Activated naive CD4-positive, alpha-beta T cell treated with anti-CD3 and anti-CD28 coated beads for 36 hours (primary cell): ENCODE measurements at regions of chr2 and their contacts with region 1.

Region 1: GRCh38 chr2:127526149-127527000 is at the start of gene IWS1:
- DNase-seq: peak; percentile 96
- H3K4me3 Mint-ChIP-seq: peak within 1 kb of the TSS; percentile 86
- H3K27ac Mint-ChIP-seq: peak within 1 kb of the TSS; percentile 90
- H3K4me1 Mint-ChIP-seq: peaks cover 27% of the 10 kb centered on the region
- H3K27me3 Mint-ChIP-seq: no peaks in the 10 kb centered on the region
- total RNA-seq, gene IWS1: 52.1 to 52.5 TPM

Region 2: GRCh38 chr2:126657636-126658318 is 868.6 kb before region 1 on chr2:
- CTCF ChIA-PET with region 1: no interaction called
- intact Hi-C with region 1: loop called (anchors 2 kb)
- DNase-seq: peak; percentile 87
- H3K4me3 Mint-ChIP-seq: peak overlapping the region; percentile 100
- H3K27ac Mint-ChIP-seq: peak overlapping the region; percentile 100
- H3K4me1 Mint-ChIP-seq: peaks cover 61% of the 10 kb centered on the region
- H3K27me3 Mint-ChIP-seq: no peaks in the 10 kb centered on the region

Region 3: GRCh38 chr2:127197475-127198385 is 328.6 kb before region 1 on chr2:
- CTCF ChIA-PET with region 1: interaction called, 3 read pairs
- intact Hi-C with region 1: loop called (anchors 5 kb)
- DNase-seq: peak; percentile 80
- H3K4me3 Mint-ChIP-seq: peak overlapping the region; percentile 69
- H3K27ac Mint-ChIP-seq: no peak overlapping the region
- H3K4me1 Mint-ChIP-seq: peaks cover 5% of the 10 kb centered on the region
- H3K27me3 Mint-ChIP-seq: no peaks in the 10 kb centered on the region

Region 4: GRCh38 chr2:127415593-127416505 is 110.5 kb before region 1 on chr2:
- CTCF ChIA-PET with region 1: no interaction called
- intact Hi-C with region 1: loop called (anchors 1 kb)
- DNase-seq: peak; percentile 91
- H3K4me3 Mint-ChIP-seq: peak overlapping the region; percentile 63
- H3K27ac Mint-ChIP-seq: peak overlapping the region; percentile 61
- H3K4me1 Mint-ChIP-seq: peaks cover 34% of the 10 kb centered on the region
- H3K27me3 Mint-ChIP-seq: peaks cover 21% of the 10 kb centered on the region

Region 5: DNA sequence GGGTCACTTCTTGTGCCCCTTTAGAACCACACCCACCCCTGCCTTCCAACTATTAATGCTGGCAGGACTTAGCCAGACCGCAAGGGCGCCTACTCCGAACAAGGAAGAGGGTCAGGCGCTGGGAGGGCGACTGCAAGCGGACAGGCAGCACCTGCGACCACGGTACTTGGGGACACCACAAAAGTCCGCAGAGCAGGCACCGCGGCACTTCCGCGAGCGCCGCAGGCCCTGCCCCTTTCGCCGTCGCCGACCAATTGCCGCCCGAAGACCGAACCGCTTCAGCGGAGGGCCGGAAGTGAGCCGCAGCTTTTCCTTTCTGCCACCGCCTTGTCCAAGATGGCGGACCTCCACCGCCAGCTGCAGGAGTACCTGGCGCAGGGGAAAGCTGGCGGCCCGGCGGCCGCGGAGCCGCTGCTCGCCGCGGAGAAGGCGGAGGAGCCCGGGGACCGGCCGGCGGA is 174.8 kb after region 1 on chr2 and contains the start of gene SFT2D3:
- CTCF ChIA-PET with region 1: no interaction called
- intact Hi-C with region 1: loop called (anchors 1 kb)
- DNase-seq: peak; percentile 94
- H3K4me3 Mint-ChIP-seq: peak within 1 kb of the TSS; percentile 88
- H3K27ac Mint-ChIP-seq: peak within 1 kb of the TSS; percentile 95
- H3K4me1 Mint-ChIP-seq: peaks cover 38% of the 10 kb centered on the region
- H3K27me3 Mint-ChIP-seq: no peaks in the 10 kb centered on the region
- total RNA-seq, gene SFT2D3: 3.1 to 3.3 TPM

Region 6: DNA sequence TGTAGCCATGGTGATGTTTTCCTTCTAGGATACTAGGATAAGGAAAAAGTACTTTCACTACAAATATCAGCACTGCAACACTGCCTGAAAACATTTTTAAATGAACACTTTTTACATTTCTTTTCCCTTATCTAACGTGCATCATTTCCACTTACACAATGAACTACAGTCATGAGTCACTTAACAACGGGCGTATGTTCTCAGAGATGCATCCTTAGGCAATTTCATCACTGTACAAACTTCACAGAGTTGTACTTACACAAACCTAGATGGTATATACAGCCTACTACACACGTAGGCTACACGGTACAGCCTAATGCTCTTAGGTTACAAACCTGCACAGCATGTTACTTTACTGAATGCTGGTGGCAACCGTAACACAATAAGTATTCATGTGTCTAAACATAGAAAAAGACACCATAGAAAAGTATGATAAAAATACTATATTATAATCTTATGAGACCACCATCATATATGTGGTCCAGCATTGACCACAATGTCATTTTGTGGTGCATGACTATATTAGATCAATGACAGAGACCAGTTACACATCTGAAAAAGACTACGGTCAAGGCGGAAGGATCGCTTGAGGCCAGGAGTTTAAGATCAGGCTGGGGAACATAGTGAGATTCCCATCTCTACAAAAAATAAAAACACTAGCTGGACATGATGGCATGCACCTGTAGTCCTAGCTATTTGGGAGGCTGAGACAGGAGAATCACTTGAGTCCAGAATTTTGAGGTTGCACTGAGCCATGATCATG is 244.8 kb after region 1 on chr2:
- CTCF ChIA-PET with region 1: no interaction called
- intact Hi-C with region 1: no loop called
- DNase-seq: no peak
- H3K4me3 Mint-ChIP-seq: no peak overlapping the region
- H3K27ac Mint-ChIP-seq: no peak overlapping the region
- H3K4me1 Mint-ChIP-seq: peaks cover 21% of the 10 kb centered on the region
- H3K27me3 Mint-ChIP-seq: no peaks in the 10 kb centered on the region

Region 7: GRCh38 chr2:128027801-128028667 is 501.7 kb after region 1 on chr2 and contains the start of gene SAP130:
- CTCF ChIA-PET with region 1: no interaction called
- intact Hi-C with region 1: loop called (anchors 1 kb)
- DNase-seq: peak; percentile 98
- H3K4me3 Mint-ChIP-seq: peak within 1 kb of the TSS; percentile 97
- H3K27ac Mint-ChIP-seq: peak within 1 kb of the TSS; percentile 72
- H3K4me1 Mint-ChIP-seq: peaks cover 11% of the 10 kb centered on the region
- H3K27me3 Mint-ChIP-seq: no peaks in the 10 kb centered on the region
- total RNA-seq, gene SAP130: 20.4 to 20.5 TPM